ENCODE measurements at regions of chr2 and their contacts with region 1.

Region 1: GRCh38 chr2:9205963-9206948 is at the start of gene ASAP2:
- DNase-seq: peak; percentile 90
- total RNA-seq, gene ASAP2: 28.1 to 31.3 TPM

Region 2: DNA sequence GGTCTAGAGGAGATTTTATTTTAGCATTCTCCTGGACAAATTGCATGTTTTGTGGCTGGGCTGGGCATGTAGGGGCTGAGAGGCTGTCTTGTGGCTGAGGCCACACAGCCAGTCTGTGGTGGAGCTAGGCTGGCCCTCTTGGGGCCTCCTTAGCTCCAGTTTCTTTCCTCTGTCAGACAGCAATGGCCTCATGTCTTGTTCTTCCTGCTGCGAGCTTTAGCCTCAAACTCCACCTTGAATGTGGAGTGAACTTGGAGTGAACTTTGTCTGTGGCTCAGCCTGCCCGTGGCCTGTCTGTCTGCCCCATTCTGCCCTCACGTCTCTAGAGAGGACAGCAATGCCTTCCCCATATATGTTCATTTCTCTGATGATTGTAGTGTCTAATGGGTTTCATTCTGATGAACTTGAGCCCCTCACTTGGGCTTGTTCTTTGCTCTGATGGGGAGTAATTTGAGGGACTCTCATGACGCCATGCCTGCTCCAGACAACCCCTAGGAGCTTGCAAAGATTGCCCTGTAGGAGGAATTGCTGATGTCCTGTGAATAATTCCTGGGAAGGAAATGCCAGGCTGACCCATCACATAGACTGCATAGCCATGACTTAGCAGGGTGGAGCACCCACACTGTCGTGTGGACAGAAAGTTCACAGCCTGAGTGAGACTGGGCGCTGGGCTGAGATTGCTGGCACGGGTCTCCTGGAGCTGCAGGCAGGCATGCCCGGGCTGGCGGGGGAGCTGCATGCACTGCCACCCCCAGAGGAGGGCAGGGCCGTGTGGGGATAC is 43.0 kb after region 1 on chr2:
- intact Hi-C with region 1: loop called in 1 of 2 experiments (anchors 5 kb)
- DNase-seq: no peak

Region 3: GRCh38 chr2:9310377-9310776 is 104.1 kb after region 1 on chr2:
- intact Hi-C with region 1: loop called in 1 of 2 experiments (anchors 10 kb)
- DNase-seq: peak; percentile 90

Region 4: DNA sequence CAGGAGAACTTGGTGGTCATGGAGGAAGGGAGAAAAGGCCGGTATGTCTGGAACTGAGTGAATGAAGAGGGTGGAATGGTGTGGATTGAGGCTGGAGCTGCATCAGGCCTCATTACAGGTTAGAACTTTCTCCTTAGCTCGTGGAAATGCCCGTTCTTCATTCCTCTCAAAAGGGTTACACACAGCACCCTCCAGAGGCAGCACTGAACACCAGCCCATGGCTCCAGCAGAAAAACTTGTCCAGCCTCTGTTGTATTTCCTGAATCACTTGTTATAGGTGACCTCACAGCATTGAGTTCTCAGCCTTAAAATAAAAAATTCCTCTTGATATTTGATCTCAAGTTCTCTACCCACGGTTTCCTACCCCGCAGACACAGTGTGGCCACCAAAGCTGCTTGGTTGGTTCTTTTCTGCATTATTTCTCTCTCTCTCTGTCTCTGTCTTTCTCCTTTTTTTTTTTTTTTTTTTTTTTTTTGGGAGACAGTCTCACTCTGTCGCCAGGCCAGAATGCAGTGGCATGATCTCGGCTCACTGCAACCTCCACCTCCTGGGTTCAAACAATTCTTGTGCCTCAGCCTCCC is 127.4 kb after region 1 on chr2:
- intact Hi-C with region 1: loop called in 1 of 2 experiments (anchors 5 kb)
- DNase-seq: no peak

Region 5: GRCh38 chr2:9415516-9416169 is 209.4 kb after region 1 on chr2:
- intact Hi-C with region 1: no loop called
- DNase-seq: no peak

Region 6: GRCh38 chr2:9919512-9919911 is 713.3 kb after region 1 on chr2:
- intact Hi-C with region 1: no loop called
- DNase-seq: no peak

Measured in posterior vena cava (tissue), 2 donors.